Breast epithelium (tissue), 4 donors: ENCODE measurements at regions of chr20 and their contacts with region 1.

Region 1: DNA sequence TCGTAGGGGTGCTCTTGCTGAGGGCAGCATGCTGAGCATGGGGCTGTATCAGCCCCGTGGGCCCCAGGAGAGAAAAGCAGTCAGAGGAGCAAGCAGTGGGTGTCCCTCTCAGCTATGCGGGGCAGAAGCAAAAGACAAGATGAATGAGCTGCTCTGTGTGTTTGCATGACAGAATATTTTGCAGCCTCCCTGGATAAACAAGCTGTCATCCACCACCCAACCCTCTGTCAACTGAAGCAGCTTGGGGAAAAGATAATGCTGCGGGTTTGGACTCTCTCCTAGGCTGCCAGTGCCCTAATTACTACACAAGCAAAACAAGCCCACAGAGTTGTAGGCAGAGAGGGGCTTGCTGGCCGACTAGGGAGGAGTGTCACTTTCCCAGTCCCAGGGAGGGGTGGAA is 82.3 kb upstream of the PTPRT start:
- DNase-seq: no peak
- H3K4me3 ChIP-seq: no peak overlapping the region
- H3K27ac ChIP-seq: no peak overlapping the region
- H3K4me1 ChIP-seq: no peaks in the 10 kb centered on the region
- H3K27me3 ChIP-seq: peaks cover 0 to 6% of the 10 kb centered on the region in 2 donors
- CTCF ChIP-seq: no peak
- POLR2A ChIP-seq: no peak

Region 2: GRCh38 chr20:41380551-41381193 is 1891.3 kb before region 1 on chr20:
- intact Hi-C with region 1: no loop called
- DNase-seq: no peak
- H3K4me3 ChIP-seq: no peak overlapping the region
- H3K27ac ChIP-seq: no peak overlapping the region
- H3K4me1 ChIP-seq: no peaks in the 10 kb centered on the region
- H3K27me3 ChIP-seq: no peaks in the 10 kb centered on the region
- CTCF ChIP-seq: no peak
- POLR2A ChIP-seq: no peak

Region 3: DNA sequence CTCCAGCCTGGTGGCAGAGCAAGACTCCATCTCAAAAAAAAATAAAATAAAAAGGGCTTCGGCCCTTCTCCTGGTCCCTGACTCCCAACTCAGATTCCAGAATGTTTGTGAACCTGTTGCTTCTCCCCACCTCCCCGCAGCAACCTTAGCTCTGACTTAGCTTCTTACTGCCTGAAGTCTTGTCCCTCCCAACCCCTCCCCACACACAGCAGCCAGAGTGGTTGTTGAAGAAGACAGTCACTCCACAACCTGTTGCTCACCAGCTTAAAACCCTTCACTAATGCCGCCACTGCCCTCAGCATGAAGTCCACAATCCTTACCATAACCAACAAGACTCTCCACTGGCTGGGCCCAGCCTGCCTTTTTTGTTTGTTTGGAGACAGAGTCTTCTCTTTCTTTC is 75.7 kb before region 1 on chr20:
- intact Hi-C with region 1: loop called (anchors 2 kb)
- DNase-seq: no peak
- H3K4me3 ChIP-seq: no peak overlapping the region
- H3K27ac ChIP-seq: no peak overlapping the region
- H3K4me1 ChIP-seq: no peaks in the 10 kb centered on the region
- H3K27me3 ChIP-seq: peaks cover 0 to 13% of the 10 kb centered on the region in 2 donors
- CTCF ChIP-seq: no peak
- POLR2A ChIP-seq: no peak